ENCODE measurements at regions of chr15 and their contacts with region 1.

Region 1: GRCh38 chr15:45118131-45118588 is 4.0 kb downstream of the DUOXA2 start:
- DNase-seq: peak; percentile 92
- CTCF ChIP-seq: peak; percentile 99

Region 2: DNA sequence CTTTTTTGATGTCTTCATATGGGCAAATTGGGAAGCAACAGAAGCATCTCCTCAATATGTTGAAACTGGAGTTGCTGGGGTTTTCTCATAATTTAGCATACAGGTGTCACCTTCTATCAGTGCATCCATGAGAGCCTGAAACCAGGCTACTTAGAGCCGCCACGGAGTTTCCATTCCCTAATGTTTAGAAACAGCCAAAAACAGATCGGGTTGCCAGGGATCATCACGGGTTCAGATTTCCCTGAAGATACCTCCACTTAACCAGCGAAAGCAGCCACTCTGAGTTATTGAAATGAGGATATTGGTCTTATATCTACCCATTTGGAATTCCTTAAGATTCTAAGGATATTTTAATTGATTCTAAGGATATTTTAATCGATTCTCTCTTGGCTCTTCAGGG is 147.1 kb before region 1 on chr15:
- CTCF ChIA-PET with region 1: interaction called, 15 read pairs
- POLR2A ChIA-PET with region 1: no interaction called
- DNase-seq: no peak
- CTCF ChIP-seq: no peak

Region 3: GRCh38 chr15:45009046-45009445 is 109.1 kb before region 1 on chr15:
- CTCF ChIA-PET with region 1: no interaction called
- POLR2A ChIA-PET with region 1: no interaction called
- DNase-seq: no peak
- CTCF ChIP-seq: no peak

Region 4: GRCh38 chr15:45064386-45064785 is 53.8 kb before region 1 on chr15:
- CTCF ChIA-PET with region 1: interaction called, 11 read pairs
- POLR2A ChIA-PET with region 1: no interaction called
- DNase-seq: no peak
- CTCF ChIP-seq: no peak

Region 5: GRCh38 chr15:45094358-45094730 is 23.8 kb before region 1 on chr15:
- CTCF ChIA-PET with region 1: interaction called, 16 read pairs
- POLR2A ChIA-PET with region 1: no interaction called
- DNase-seq: no peak
- CTCF ChIP-seq: no peak

Region 6: GRCh38 chr15:45134682-45135604 is 16.8 kb after region 1 on chr15:
- CTCF ChIA-PET with region 1: interaction called, 53 read pairs
- POLR2A ChIA-PET with region 1: interaction called, 3 read pairs
- DNase-seq: no peak
- CTCF ChIP-seq: peak; percentile 35